Activated T-helper 1 cell treated with anti-CD3 and anti-CD28 coated beads, Interleukin-12 subunit alpha, Interleukin-12 subunit beta, Interleukin-2, Interleukin-4 antibody, amounts not matched to agents 30 ng/mL and 10 ng/mL and 1 ng/mL, durations not matched to agents 14 hours and 24 hours and 36 hours (primary cell): ENCODE measurements at regions of chr2 and their contacts with region 1.

Region 1: DNA sequence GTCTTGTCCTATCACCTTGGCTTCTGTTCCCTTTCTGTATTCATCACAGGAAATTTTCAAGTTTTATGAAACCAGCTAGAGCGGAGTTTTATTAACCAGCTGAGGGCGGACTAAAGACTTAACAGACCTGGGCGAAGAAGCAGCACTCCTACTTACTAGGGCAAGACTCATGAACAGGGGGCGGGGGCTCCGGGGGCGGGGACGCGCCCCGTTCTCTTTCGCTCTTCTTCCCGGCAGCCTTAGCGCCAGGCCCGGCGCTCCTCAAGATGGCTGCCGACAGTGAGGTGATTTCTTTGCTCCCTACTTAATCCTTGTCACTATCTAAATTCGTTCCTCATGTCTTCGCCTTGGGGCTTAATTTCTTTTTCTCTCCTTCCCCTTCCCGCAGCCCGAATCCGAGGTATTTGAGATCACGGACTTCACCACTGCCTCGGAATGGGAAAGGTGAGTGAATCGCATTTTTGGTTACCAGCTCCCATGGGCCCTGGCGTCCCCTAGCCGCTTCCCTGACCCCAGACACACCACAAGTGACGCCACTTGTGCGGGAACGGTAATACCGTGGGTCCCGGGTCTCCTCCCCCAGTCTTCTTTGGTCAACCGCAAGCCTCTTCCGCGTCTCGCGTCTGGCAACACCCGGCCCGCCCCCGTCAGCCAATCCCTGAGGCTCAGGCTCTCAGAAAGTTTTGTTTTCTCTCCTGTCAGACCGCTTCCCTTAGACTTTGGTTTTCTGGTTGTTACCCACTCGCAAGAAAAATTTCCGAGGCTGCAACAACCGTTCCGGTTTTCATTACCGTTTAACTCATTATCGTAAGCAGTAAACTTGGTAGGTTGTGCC is at the start of gene RAB3GAP1:
- DNase-seq: peak; percentile 94
- H3K4me3 Mint-ChIP-seq: peak within 1 kb of the TSS; percentile 92
- H3K27ac Mint-ChIP-seq: peak within 1 kb of the TSS; percentile 99
- H3K4me1 Mint-ChIP-seq: peaks cover 54% of the 10 kb centered on the region
- H3K27me3 Mint-ChIP-seq: peaks cover 1% of the 10 kb centered on the region
- total RNA-seq, gene RAB3GAP1: 23.4 and 25.6 TPM in 2 replicates

Region 2: GRCh38 chr2:134918526-134919340 is 133.5 kb before region 1 on chr2 and contains the start of gene CCNT2:
- intact Hi-C with region 1: loop called (anchors 1 kb)
- DNase-seq: peak; percentile 100
- H3K4me3 Mint-ChIP-seq: peak within 1 kb of the TSS; percentile 96
- H3K27ac Mint-ChIP-seq: peak within 1 kb of the TSS; percentile 97
- H3K4me1 Mint-ChIP-seq: peaks cover 28% of the 10 kb centered on the region
- H3K27me3 Mint-ChIP-seq: peaks cover 11% of the 10 kb centered on the region
- total RNA-seq, gene CCNT2: 41.4 and 43.7 TPM in 2 replicates

Region 3: GRCh38 chr2:135154962-135155361 is 102.7 kb after region 1 on chr2:
- intact Hi-C with region 1: loop called (anchors 5 kb)
- DNase-seq: no peak
- H3K4me3 Mint-ChIP-seq: no peak overlapping the region
- H3K27ac Mint-ChIP-seq: no peak overlapping the region
- H3K4me1 Mint-ChIP-seq: peaks cover 36% of the 10 kb centered on the region
- H3K27me3 Mint-ChIP-seq: no peaks in the 10 kb centered on the region

Region 4: DNA sequence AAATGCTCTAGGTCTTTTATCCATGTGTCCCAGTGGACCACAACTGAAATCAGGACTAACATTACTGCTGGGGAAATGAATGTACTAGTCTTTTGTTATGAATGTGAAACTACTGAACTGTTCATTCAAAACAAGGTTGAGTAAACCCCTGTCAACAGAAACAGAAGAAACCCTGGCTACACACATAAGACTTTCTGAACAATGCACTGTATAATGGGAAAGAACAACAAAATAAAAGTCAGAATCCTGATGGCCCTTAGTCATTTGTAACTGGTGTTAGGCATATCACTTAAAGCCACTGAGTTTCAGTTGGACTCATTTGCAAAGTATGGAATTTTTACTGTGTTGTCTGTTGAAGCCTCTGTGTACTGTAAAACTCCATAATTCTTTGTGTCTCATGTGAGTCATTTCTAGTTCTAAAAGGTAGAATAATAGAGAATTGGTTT is 612.4 kb after region 1 on chr2:
- intact Hi-C with region 1: loop called (anchors 1 kb)
- DNase-seq: no peak
- H3K4me3 Mint-ChIP-seq: no peak overlapping the region
- H3K27ac Mint-ChIP-seq: peak overlapping the region; percentile 71
- H3K4me1 Mint-ChIP-seq: peaks cover 37% of the 10 kb centered on the region
- H3K27me3 Mint-ChIP-seq: no peaks in the 10 kb centered on the region

Region 5: DNA sequence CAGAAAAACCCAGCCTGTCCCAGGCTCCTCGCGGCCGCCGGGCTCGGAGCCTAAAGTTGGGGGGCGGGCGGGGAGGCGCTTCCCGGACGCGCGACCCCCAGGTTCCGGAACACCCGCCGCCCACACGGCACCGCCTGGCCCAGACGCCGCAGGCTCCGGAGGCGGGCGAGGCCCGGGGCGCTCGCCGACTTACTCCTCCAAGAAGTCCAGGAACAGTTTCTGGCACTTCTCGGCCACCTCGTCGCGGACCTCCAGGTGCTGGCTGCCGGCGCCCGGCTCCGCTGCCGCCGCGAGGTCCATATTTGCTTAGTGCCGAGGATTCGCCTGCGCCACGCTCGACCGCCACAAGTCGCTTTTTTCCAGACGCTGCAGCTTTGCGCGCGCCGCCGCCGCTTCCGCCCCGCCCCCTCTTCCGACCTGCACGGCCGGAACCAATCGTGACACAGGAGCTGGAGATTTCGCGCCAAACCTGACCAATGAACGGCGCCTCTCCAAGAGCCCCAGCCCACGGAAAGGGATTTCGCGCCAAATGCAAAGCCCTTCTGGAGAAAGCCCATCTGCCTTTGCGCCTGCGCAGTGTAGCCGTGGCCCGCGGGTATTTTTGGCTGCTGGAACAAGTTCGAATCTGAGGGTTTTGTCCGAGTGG is 823.9 kb after region 1 on chr2 and contains the start of gene MCM6:
- intact Hi-C with region 1: loop called (anchors 1 kb)
- DNase-seq: peak; percentile 99
- H3K4me3 Mint-ChIP-seq: peak within 1 kb of the TSS; percentile 98
- H3K27ac Mint-ChIP-seq: peak within 1 kb of the TSS; percentile 99
- H3K4me1 Mint-ChIP-seq: peaks cover 45% of the 10 kb centered on the region
- H3K27me3 Mint-ChIP-seq: peaks cover 2% of the 10 kb centered on the region
- total RNA-seq, gene MCM6: 176 and 177 TPM in 2 replicates

Region 6: DNA sequence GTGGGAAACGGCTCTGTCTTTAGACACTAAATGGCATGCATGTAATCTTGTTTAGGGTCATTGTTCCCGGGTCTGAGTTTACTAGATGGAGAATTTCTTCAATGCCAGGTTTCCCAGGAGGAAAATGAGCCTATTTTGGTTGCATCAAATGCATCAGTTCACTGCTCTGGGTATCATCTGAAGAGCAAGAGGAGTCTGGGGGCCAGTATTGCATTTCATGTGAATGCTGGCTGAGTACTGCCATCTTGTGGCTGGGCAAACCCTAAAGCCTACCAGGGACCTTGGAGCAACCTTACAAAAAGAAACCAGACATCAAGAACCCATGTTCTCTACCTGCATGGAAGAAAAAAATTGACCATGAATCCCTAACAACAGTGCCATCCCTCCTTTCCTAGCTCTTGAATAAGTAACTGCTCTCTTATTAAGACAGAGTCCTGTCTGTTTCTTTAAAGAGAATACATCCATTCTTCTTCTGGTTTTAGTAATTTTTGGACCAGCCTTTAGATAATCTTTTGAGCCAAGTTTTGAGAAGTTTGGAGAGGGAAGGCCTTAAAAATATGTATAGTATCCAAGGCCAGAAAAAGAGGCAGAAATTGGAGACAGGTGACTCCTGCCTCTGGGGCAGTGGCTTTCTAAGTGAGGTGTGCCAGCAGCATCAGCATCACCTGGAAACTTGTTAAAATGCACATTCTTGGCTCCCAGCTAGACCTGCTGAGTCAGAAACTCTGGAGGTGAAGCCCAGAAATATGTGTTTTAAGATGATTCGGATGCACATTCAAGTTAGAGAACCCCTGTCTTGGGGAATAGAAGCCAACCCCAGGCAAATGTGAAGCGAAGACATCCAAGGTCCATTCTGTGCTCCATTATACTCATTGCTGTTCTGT is 1326.7 kb after region 1 on chr2:
- intact Hi-C with region 1: loop called (anchors 1 kb)
- DNase-seq: peak; percentile 70
- H3K4me3 Mint-ChIP-seq: no peak overlapping the region
- H3K27ac Mint-ChIP-seq: no peak overlapping the region
- H3K4me1 Mint-ChIP-seq: peaks cover 80% of the 10 kb centered on the region
- H3K27me3 Mint-ChIP-seq: no peaks in the 10 kb centered on the region